BJ (cell line): ENCODE measurements at regions of chr1 and their contacts with region 1.

Region 1: DNA sequence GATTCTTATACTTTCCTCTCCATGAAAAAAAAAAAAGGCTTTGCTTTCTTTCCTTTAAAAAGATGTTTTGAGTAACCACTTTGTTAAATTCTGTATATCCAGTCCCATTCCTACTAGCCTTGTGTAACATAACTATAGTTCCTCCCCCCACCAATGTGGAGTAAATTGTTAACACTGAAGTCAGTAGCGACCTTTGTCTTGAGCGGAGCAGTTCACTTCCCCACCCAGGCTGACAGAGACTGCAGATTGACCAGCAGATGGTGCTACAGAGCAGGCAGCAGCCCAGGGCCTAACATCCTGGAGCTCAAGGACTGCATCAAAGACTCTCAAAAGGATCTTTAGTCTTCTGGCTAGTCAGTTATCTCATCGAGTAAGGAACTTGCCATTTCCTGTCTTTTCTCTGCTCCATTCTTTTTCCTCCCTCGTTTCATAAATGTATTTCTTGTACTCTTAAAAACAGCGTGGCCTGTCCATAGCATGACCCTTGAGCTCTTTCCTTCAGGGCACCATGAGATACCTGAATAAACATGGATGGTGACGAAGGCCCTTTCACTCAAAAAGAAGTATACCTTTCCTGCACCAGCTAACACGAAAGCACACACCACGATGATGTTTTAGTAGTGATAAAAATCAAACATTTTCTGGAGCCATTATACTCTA is 503.5 kb upstream of the PKN2 start:
- DNase-seq: no peak
- H3K4me3 ChIP-seq: no peak overlapping the region
- H3K27me3 ChIP-seq: no peaks in the 10 kb centered on the region
- CTCF ChIP-seq: peak; percentile 88

Region 2: DNA sequence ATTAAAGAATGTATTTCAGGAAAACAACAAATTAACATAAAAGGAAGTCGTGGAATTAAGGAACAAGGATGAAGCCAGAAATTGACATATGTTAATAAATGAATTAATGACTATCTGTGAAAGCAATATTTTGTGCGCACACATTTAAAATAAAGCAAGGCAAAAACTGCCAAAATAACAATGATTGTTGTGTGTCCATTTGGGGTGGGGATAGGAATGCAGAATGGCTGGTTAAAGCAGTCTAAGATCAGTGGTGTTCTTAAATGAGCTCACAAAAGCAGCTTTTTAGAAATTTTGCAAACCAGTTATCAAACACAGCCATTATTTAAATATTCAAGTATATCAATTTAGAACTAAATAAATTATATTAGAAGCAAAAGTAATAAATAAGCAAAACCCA is 12.8 kb after region 1 on chr1:
- CTCF ChIA-PET with region 1: interaction called, 16 read pairs
- POLR2A ChIA-PET with region 1: no interaction called
- DNase-seq: no peak
- H3K4me3 ChIP-seq: no peak overlapping the region
- H3K27me3 ChIP-seq: no peaks in the 10 kb centered on the region
- CTCF ChIP-seq: no peak